Activated CD4-positive, alpha-beta T cell treated with anti-CD3 and anti-CD28 coated beads for 36 hours (primary cell): ENCODE measurements at regions of chr19 and their contacts with region 1.

Region 1: DNA sequence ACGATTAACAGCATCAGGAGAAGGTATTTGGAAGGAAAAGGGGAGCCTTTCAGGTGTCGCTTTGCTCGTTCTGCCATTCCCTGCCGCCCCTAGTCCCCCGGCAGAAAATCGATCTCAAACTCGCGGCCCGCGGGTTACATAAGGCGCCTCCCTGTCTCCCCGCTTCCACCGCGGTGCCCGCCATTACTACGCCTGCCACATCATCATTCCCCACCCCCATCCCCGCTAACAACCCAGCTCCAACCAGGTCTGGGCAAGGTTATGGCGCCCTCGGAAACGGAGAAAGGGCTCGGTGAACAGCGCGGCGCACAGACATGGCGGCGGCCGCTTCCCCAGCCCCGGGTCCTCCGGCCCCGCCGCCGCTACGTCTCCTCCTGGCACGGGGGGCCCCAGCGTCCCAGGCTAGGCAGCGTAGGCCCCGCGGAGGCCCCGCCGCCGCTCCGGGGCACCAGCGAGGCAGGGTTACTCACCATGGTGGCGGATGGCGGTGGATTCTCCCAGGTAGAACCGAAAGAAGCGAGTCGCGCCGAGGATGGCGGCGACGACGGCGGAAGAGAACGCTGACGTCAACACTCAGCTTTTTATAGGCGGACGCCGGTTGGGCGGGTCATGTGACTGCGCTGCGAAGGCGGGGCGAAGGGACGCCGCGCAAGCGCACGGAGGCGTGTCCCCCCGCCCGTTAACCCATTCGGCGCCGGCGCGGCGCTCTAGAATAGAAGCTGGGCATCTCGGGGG is at the start of gene EEF2:
- DNase-seq: peak; percentile 94
- ATAC-seq: peak; percentile 45
- H3K4me3 Mint-ChIP-seq: peak within 1 kb of the TSS; percentile 87
- H3K27ac Mint-ChIP-seq: peak within 1 kb of the TSS; percentile 94
- H3K4me1 Mint-ChIP-seq: peaks cover 52% of the 10 kb centered on the region
- H3K27me3 Mint-ChIP-seq: no peaks in the 10 kb centered on the region
- total RNA-seq, gene EEF2: 3,116 to 3,255 TPM

Region 2: DNA sequence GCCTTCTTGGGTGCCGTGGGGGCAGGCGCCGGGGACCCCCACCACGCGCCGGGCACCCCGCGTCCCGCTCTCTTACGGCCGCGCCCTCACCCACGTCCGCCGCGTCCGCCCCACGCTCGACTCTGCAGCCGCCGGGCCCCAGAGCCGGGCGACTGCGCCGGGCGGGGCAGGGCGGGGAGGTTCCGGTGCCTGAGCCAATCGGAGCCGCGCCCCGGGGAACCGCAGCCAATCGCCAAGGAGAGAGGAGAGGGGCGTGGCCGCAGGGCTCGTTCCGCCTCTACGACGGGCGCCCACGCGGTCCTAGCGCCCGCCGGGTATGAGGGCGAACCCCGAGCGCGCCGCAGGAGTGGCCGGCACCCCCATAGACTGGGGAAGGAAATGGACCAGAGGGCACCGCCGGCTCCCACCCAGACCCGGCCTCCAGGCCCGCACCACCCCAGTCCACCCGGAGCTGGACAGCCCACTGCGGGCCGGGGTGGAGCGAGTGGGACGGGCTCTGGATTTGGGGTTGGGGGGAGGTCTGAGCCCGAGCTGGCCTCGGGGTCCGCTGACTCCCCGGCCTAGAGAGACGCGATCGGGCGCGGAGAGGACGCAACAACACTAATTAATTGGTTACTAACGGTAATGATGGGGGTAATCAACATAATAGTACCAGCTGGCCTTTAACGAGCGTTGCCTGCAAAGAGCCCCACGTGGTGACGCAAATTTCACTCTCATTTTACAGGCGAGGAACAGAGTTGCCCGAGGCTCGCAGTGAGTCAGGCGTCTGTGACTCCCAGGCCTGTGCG is 427.4 kb before region 1 on chr19 and contains the start of gene MFSD12:
- CTCF ChIA-PET with region 1: no interaction called
- POLR2A ChIA-PET with region 1: no interaction called
- intact Hi-C with region 1: loop called in 1 of 2 experiments (anchors 1 kb)
- DNase-seq: peak; percentile 97
- ATAC-seq: peak; percentile 89
- H3K4me3 Mint-ChIP-seq: peak within 1 kb of the TSS; percentile 96
- H3K27ac Mint-ChIP-seq: peak within 1 kb of the TSS; percentile 92
- H3K4me1 Mint-ChIP-seq: peaks cover 36% of the 10 kb centered on the region
- H3K27me3 Mint-ChIP-seq: no peaks in the 10 kb centered on the region
- total RNA-seq, gene MFSD12: 44.7 to 46.7 TPM

Region 3: GRCh38 chr19:3970808-3971598 is 14.1 kb before region 1 on chr19 and contains the start of gene DAPK3:
- CTCF ChIA-PET with region 1: interaction called, 9 read pairs
- POLR2A ChIA-PET with region 1: interaction called, 30 read pairs
- intact Hi-C with region 1: loop called (anchors 1 to 2 kb)
- DNase-seq: peak; percentile 97
- ATAC-seq: peak; percentile 95
- H3K4me3 Mint-ChIP-seq: peak within 1 kb of the TSS; percentile 83
- H3K27ac Mint-ChIP-seq: peak within 1 kb of the TSS; percentile 58
- H3K4me1 Mint-ChIP-seq: peaks cover 22% of the 10 kb centered on the region
- H3K27me3 Mint-ChIP-seq: no peaks in the 10 kb centered on the region
- total RNA-seq, gene DAPK3: 26.7 to 27.6 TPM

Region 4: DNA sequence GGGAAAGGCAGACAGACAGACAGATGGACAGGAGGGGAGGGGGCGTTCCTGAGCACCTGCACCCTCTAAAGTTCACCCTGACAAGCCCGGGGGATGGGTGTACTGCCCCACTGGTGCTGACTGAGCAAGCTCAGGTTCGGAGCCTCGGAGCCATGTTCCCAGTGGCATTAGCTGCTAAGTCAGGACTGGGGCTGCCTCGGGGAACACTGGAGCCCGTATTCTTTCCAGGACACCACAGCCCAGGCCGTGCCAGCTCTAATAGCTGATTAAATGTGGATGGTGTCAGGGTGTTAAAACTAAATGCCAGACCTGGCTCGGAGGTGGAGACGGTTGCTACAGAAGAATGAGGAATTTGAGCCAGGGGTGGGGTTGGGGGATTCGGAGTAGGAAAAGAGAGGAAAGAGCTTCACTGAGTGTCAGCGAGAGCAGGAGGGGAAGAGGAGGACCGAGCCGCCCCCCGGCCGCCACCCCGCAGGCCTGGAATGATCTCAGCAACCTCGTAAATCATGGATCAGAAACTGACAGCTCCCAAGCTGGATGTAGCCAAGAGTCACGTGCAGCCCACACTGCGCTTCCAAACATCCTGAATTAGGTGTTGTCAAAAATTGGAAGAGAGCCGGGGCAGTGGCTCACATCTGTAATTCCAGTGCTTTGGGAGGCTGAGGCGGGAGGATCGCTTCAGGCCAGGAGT is 128.5 kb after region 1 on chr19:
- CTCF ChIA-PET with region 1: no interaction called
- POLR2A ChIA-PET with region 1: no interaction called
- intact Hi-C with region 1: no loop called
- DNase-seq: no peak
- ATAC-seq: no peak
- H3K4me3 Mint-ChIP-seq: no peak overlapping the region
- H3K27ac Mint-ChIP-seq: no peak overlapping the region
- H3K4me1 Mint-ChIP-seq: peaks cover 33% of the 10 kb centered on the region
- H3K27me3 Mint-ChIP-seq: no peaks in the 10 kb centered on the region

Region 5: GRCh38 chr19:4123615-4124568 is 138.8 kb after region 1 on chr19 and contains the start of gene MAP2K2:
- CTCF ChIA-PET with region 1: no interaction called
- POLR2A ChIA-PET with region 1: no interaction called
- intact Hi-C with region 1: loop called in 1 of 2 experiments (anchors 1 kb)
- DNase-seq: peak; percentile 98
- ATAC-seq: peak; percentile 96
- H3K4me3 Mint-ChIP-seq: peak within 1 kb of the TSS; percentile 97
- H3K27ac Mint-ChIP-seq: peak within 1 kb of the TSS; percentile 92
- H3K4me1 Mint-ChIP-seq: peaks cover 18% of the 10 kb centered on the region
- H3K27me3 Mint-ChIP-seq: no peaks in the 10 kb centered on the region
- total RNA-seq, gene MAP2K2: 108 to 133 TPM

Region 6: DNA sequence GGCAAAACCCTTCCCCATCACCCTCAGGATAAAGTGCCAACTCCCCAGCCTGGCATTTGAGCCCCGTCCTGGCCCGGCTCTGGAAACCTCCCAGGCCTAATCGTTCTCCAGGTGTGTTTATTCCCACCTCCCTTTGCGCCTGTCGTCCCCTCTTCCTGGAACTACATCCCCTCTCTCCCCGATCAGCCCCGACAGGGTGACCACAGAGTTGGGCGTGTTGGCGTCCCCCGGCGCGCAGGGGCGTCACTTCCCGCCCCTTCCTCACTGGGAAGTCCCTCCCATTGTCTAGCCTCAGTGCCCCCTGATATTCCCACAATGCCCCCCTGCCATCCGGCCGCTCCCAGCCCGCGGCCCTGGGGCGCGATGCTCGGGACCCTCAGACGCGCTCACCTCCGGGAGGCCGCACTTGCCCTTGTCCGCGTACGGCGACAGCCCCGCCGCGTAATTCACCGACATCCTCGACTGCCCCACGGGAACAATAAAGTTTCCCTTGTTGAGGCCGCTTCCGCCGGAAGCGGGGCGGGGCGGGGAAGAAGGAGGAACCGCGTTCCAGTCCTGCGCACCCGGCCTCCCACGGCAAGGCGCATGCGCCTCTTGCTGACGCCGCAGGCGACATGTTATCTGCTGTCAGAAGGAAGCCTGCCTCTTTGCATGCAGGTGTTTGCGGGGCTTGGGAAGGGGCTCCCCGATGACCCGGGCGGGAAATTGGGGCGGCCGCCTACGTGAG is 197.2 kb after region 1 on chr19 and contains the starts of genes ANKRD24 and SIRT6:
- CTCF ChIA-PET with region 1: no interaction called
- POLR2A ChIA-PET with region 1: no interaction called
- intact Hi-C with region 1: loop called (anchors 1 to 2 kb)
- DNase-seq: peak; percentile 98
- ATAC-seq: peak; percentile 84
- H3K4me3 Mint-ChIP-seq: peak within 1 kb of the TSS; percentile 92
- H3K27ac Mint-ChIP-seq: peak within 1 kb of the TSS; percentile 93
- H3K4me1 Mint-ChIP-seq: peaks cover 30% of the 10 kb centered on the region
- H3K27me3 Mint-ChIP-seq: no peaks in the 10 kb centered on the region
- total RNA-seq, gene ANKRD24: 1.1 to 1.3 TPM
- total RNA-seq, gene SIRT6: 26.2 to 29.4 TPM

Region 7: DNA sequence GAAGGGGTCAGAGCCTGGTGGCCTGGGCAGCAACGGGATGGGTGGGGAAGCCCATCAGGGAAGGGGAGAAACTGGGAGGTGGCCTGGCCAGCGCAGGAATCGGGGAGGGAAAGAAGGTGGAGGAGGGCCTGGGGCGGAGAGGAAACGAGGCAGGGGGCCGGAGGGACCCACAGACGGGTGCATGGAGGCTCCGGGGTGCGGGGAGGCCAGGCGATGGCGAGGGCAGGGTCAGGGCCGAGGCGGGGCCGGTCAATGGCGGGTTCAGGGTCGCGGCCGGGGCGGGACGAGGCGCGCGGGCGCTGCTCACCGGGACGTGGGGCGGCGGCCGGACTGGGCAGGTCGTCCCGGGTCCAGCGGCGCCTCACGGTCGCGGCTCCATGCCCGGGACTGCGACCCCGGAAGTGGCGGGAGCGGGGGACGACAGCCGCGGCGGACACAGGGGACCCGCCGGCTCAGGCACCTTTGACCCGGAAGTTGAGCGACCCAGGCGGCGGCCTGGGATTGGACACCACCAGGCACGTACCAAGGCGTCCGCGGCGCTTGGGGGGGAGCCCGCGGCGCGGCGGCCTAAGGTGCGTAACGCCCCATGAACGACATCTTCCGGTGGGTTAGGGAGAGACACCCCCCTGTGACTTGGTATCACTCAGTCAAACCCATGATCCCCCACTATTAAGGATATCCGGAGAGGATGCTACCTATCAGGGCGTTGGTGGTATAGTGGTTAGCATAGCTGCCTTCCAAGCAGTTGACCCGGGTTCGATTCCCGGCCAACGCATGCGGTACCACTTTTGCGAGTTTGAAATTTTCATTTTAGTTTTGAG is 738.5 kb after region 1 on chr19 and contains the start of gene DPP9:
- CTCF ChIA-PET with region 1: no interaction called
- POLR2A ChIA-PET with region 1: no interaction called
- intact Hi-C with region 1: loop called in 1 of 2 experiments (anchors 5 kb)
- DNase-seq: peak; percentile 98
- ATAC-seq: peak; percentile 95
- H3K4me3 Mint-ChIP-seq: peak within 1 kb of the TSS; percentile 92
- H3K27ac Mint-ChIP-seq: peak within 1 kb of the TSS; percentile 93
- H3K4me1 Mint-ChIP-seq: peaks cover 26% of the 10 kb centered on the region
- H3K27me3 Mint-ChIP-seq: no peaks in the 10 kb centered on the region
- total RNA-seq, gene DPP9: 49.2 to 51.3 TPM